ENCODE measurements at regions of chr14 and their contacts with region 1.

Region 1: GRCh38 chr14:57747036-57747435 is 118.9 kb downstream of the SLC35F4 start:
- DNase-seq: peak; percentile 22
- H3K4me3 ChIP-seq: no peak overlapping the region
- H3K27ac ChIP-seq: no peak overlapping the region
- H3K4me1 ChIP-seq: peaks cover 18% of the 10 kb centered on the region
- H3K27me3 ChIP-seq: no peaks in the 10 kb centered on the region
- CTCF ChIP-seq: no peak

Region 2: GRCh38 chr14:57822081-57822480 is 75.0 kb after region 1 on chr14:
- CTCF ChIA-PET with region 1: no interaction called
- dilution Hi-C with region 1: no loop called
- in situ Hi-C with region 1: loop called in 1 of 2 experiments (anchors 10 kb)
- intact Hi-C with region 1: no loop called
- DNase-seq: peak; percentile 56
- H3K4me3 ChIP-seq: no peak overlapping the region
- H3K27ac ChIP-seq: no peak overlapping the region
- H3K4me1 ChIP-seq: peaks cover 2% of the 10 kb centered on the region
- H3K27me3 ChIP-seq: no peaks in the 10 kb centered on the region
- CTCF ChIP-seq: no peak

Region 3: GRCh38 chr14:57865403-57866198 is 118.6 kb after region 1 on chr14 and contains the start of gene SLC35F4:
- CTCF ChIA-PET with region 1: no interaction called
- dilution Hi-C with region 1: no loop called
- in situ Hi-C with region 1: no loop called
- intact Hi-C with region 1: no loop called
- DNase-seq: peak; percentile 13
- H3K4me3 ChIP-seq: no peak within 1 kb of the TSS
- H3K27ac ChIP-seq: no peak within 1 kb of the TSS
- H3K4me1 ChIP-seq: peaks cover 5% of the 10 kb centered on the region
- H3K27me3 ChIP-seq: peaks cover 34% of the 10 kb centered on the region
- CTCF ChIP-seq: no peak
- total RNA-seq, gene SLC35F4: 0.42 TPM in 1 of 2 donors, not detected in the other

Region 4: DNA sequence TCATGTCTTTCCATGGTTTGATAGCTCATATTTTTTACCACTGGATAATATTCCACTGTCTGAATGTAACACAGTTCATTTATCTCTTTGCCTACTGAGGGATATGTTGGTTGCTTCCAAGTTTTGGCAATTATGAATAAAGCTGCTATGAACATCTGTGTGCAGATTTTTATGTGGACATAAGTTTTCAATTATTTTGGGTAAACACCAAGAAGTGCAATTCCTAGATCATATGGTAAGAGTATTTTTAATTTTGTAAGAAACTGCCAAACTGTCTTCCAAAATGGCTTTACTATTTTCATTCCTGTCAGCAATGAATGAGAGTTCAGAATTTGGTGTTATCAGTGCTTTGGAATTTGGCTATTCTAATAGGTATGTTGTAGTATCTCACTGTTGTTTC is 162.6 kb after region 1 on chr14:
- CTCF ChIA-PET with region 1: no interaction called
- dilution Hi-C with region 1: no loop called
- in situ Hi-C with region 1: no loop called
- intact Hi-C with region 1: no loop called
- DNase-seq: no peak
- H3K4me3 ChIP-seq: no peak overlapping the region
- H3K27ac ChIP-seq: no peak overlapping the region
- H3K4me1 ChIP-seq: no peaks in the 10 kb centered on the region
- H3K27me3 ChIP-seq: peaks cover 1% of the 10 kb centered on the region
- CTCF ChIP-seq: no peak

Measured in mammary epithelial cell (primary cell).